ENCODE measurements at regions of chr1 and their contacts with region 1.

Region 1: GRCh38 chr1:168637350-168637991 is 61.1 kb downstream of the XCL1 start:
- DNase-seq: peak; percentile 6
- H3K4me3 ChIP-seq: no peak overlapping the region; a peak in 1 of 4 replicates
- H3K27ac ChIP-seq: peak overlapping the region in 1 of 2 experiments; percentile 36; a peak in 1 of 4 replicates
- H3K4me1 ChIP-seq: peaks cover 0 to 8% of the 10 kb centered on the region in 2 experiments; a peak in 2 of 4 replicates
- H3K27me3 ChIP-seq: no peaks in the 10 kb centered on the region
- CTCF ChIP-seq: peak; percentile 62
- EP300 ChIP-seq: no peak
- RAD21 ChIP-seq: peak; percentile 62

Region 2: GRCh38 chr1:168653567-168653966 is 16.1 kb after region 1 on chr1:
- CTCF ChIA-PET with region 1: interaction called, 10 read pairs
- POLR2A ChIA-PET with region 1: no interaction called
- DNase-seq: no peak
- H3K4me3 ChIP-seq: no peak overlapping the region
- H3K27ac ChIP-seq: peak overlapping the region; percentile 22 to 82; a peak in 3 of 4 replicates
- H3K4me1 ChIP-seq: no peaks in the 10 kb centered on the region; a peak in 2 of 4 replicates
- H3K27me3 ChIP-seq: no peaks in the 10 kb centered on the region
- CTCF ChIP-seq: no peak
- EP300 ChIP-seq: peak in 1 of 2 experiments; percentile 76; a peak in 2 of 4 replicates
- RAD21 ChIP-seq: no peak

Measured in SK-N-SH (cell line).